GM10248 (cell line): ENCODE measurements at regions of chr9 and their contacts with region 1.

Region 1: GRCh38 chr9:6305954-6306563 is 22.1 kb upstream of the TPD52L3 start:
- DNase-seq: peak; percentile 42
- CTCF ChIP-seq: peak; percentile 50

Region 2: DNA sequence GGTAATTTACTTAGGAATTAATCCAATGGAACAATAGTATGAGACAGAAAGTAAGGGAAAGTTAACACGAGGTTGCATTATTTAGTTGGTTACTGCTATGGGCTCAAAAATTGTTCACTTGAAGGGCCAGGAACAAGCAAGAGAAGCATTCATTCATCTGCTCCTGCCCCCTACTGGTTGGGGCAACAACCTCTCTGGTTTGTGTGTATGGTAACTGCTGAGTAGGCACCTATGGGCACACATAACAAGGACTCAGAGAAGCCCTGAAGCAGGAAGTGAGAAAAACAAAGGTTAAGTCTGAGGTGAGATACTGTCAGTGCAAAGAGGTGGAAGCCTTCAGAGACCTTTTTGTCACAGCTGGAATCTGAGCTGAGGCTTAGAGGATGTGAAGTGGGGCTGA is 256.3 kb before region 1 on chr9:
- CTCF ChIA-PET with region 1: interaction called, 48 read pairs
- POLR2A ChIA-PET with region 1: no interaction called
- DNase-seq: peak; percentile 41
- CTCF ChIP-seq: peak; percentile 42

Region 3: GRCh38 chr9:6068983-6069382 is 237.1 kb before region 1 on chr9:
- CTCF ChIA-PET with region 1: interaction called, 12 read pairs
- POLR2A ChIA-PET with region 1: no interaction called
- DNase-seq: peak; percentile 74
- CTCF ChIP-seq: no peak

Region 4: GRCh38 chr9:6328103-6328502 is 22.0 kb after region 1 on chr9 and contains the start of gene TPD52L3:
- CTCF ChIA-PET with region 1: interaction called, 13 read pairs
- POLR2A ChIA-PET with region 1: no interaction called
- DNase-seq: no peak
- CTCF ChIP-seq: no peak

Region 5: DNA sequence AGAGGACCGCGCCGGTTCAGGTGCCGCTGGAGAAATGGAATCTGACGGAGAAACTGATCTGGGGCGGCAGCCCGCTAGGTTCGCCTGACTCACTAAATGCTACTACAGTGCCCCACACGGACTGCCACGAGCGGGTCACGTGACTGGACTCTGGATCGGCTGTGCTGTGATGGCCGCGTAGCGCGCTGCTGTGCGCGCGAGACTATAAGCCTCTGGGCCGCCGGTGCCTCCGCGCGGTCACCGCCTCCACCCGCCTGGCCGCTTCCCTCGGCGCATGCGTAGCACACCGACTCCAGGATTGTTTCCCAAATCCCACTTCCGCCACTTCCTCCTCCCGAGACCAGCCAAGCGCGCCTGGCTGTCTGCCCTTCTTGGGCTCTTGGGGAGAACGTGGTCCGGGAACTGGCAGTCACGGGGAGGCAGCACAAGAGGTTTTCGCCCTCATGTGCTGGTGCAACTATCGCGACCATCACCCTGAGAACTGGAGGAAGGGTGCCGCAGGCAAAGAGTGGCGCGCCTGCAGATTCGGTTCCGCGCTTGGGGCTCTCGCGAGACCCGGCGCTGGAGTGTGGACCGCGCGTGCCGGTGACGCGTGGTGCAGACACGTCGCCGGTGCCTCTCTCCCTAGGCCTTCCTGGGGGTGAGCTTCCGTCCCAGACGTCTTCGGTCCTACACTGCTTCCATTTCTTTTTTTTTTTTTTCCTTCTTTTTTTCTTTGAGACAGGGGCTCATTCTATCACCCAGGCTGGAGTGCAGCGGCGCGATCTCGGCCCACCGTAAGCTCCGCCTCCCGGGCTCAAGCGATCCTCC is 375.3 kb after region 1 on chr9:
- CTCF ChIA-PET with region 1: no interaction called
- POLR2A ChIA-PET with region 1: no interaction called
- DNase-seq: peak; percentile 94
- CTCF ChIP-seq: no peak